GM18951 (cell line): ENCODE measurements at regions of chr1 and their contacts with region 1.

Region 1: GRCh38 chr1:78132174-78132947 is 86.6 kb downstream of the GIPC2 start:
- POLR2A ChIP-seq: no peak

Region 2: DNA sequence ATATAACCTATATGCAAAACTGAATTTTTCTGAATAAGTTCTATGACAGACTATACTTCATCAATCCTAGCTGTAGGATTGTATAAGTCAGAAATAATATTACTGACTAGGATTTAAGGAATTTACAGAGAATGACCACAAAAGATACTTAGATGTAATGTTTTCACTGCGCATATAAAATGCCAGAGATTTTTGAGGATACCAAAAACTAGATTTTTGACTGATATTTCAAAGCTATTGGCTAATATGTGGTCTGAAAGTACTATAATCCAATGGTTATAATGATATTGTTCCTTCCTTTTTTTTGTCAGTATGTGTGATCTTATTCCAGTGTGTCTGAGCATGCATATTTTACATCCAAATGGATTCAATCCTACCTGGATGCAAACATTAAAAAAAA is 470.8 kb after region 1 on chr1:
- in situ Hi-C with region 1: loop called (anchors 5 kb)
- POLR2A ChIP-seq: no peak